B cell (primary cell): ENCODE measurements at regions of chr17 and their contacts with region 1.

Region 1: DNA sequence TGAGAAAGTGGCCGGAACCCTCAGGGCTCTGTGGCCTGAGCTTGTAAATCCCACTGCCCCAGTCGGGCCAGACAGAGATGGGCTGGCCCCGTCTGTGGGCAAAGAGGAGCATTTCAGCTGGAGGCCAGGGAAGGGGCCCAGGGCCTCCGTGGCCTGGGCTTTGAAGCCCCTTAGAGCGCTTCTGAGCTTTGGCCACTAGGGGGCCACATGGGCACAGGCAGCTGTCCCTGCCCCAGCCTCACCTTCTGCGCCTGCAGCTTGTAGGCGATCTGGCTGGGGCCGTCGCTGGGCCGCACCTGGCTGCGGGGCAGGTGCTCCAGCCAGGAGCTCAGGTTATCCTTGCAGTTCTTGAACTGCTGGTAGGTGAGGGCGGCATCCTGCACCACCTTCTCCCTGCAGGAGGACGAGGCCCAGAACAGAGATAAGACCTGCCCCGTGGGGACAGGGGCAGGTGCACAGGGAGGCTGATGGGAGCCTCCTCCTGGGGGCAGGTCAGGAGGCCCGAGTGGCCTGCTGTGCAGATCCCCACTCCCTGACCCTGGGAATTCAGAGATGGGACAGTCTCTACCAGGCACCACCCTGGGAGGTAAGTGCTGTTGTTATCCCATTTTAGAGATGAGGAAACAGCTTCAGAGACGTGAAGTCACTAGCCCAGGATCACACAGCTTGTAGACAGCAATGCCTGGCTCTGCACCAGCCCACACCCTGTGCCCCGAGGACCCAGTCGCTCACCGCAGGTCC is 12.8 kb downstream of the EVPL start:
- DNase-seq: peak; percentile 83
- ATAC-seq: peak; percentile 98
- H3K4me3 ChIP-seq: no peak overlapping the region
- H3K4me3 Mint-ChIP-seq: no peak overlapping the region
- H3K27ac ChIP-seq: no peak overlapping the region
- H3K27ac Mint-ChIP-seq: peak overlapping the region; percentile 56
- H3K4me1 ChIP-seq: peaks cover 0 to 7% of the 10 kb centered on the region in 2 donors
- H3K4me1 Mint-ChIP-seq: no peaks in the 10 kb centered on the region
- H3K27me3 ChIP-seq: peaks cover 0 to 7% (median 2%) of the 10 kb centered on the region in 4 experiments
- H3K27me3 Mint-ChIP-seq: no peaks in the 10 kb centered on the region
- CTCF ChIP-seq: peak; percentile 98

Region 2: DNA sequence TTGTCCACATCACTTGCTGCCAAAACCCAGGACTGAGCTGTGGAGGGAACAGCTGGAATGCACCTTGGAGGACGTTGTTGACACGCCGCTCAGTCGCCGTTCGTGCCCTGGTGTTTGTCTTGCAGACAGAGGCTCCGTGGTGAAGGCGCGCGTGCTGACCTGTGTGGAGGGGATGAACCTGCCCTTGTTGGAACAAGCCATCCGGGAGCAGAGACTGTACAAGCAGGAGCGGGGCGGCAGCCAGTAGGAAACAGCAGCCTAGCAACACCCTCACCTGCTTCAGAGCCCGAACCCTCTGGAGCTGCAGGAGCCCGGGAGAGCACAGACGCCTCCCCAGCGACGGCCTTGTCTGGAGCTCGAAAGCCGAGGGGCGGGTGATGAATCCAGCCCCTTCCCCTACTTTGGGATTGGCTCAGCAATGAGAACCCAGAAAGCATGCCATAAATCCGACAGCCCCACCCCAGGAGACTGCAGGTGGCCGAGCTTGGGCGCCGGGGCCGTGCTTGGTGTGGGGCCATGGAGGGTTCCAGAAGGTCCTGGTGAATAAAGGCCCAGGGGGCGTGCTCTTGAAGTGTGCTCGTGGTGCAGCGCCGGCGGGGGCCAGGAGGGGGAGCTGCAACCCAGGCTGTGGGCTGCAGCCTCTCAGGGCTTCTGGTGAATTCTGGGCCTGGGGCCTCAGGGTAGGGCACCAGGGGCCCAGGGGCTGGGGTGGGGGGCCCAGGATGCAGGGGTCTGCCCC is 14.2 kb before region 1 on chr17:
- CTCF ChIA-PET with region 1: interaction called, 20 read pairs
- POLR2A ChIA-PET with region 1: no interaction called
- intact Hi-C with region 1: no loop called
- DNase-seq: peak; percentile 60
- ATAC-seq: peak; percentile 74
- H3K4me3 ChIP-seq: no peak overlapping the region
- H3K4me3 Mint-ChIP-seq: no peak overlapping the region
- H3K27ac ChIP-seq: no peak overlapping the region
- H3K27ac Mint-ChIP-seq: no peak overlapping the region
- H3K4me1 ChIP-seq: peaks cover 9 to 14% of the 10 kb centered on the region in 2 donors
- H3K4me1 Mint-ChIP-seq: peaks cover 11% of the 10 kb centered on the region
- H3K27me3 ChIP-seq: no peaks in the 10 kb centered on the region
- H3K27me3 Mint-ChIP-seq: no peaks in the 10 kb centered on the region
- CTCF ChIP-seq: peak; percentile 70

Region 3: DNA sequence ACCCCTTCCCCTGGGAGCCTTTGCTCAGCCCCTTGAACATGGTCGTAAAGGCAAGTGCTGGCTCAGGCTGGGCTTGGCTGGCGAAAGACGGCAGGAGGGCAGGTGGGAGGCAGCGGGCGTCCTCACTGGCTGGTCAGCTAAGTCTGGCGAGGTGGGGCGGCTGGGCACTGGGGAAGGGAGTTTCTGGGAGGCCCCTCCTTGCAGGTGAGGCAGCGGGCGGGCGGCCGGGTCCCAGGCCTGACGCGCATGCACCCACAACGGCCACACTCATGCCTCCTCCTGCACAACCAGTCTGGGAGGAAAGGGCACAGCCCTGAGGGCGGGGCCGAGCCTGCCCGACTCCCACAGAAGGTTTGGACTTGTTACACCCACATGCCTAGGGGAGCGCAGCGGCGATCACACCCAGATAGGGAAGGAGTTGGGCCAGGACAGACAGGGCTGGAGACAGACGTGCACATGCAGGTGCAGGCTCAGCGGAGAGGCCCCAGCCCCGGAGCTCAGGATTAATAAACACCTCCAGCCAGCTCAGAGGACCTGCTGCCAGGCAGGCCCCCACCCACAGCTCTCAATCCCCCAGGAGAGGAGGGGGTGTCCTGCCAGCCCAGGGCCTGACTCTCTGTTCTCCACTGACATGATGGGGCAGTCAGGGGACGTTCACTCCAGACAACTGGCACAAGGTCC is 12.9 kb after region 1 on chr17 and contains the start of gene EVPL:
- CTCF ChIA-PET with region 1: interaction called, 11 read pairs
- POLR2A ChIA-PET with region 1: interaction called, 3 read pairs
- intact Hi-C with region 1: no loop called
- DNase-seq: no peak
- ATAC-seq: no peak
- H3K4me3 ChIP-seq: no peak within 1 kb of the TSS
- H3K4me3 Mint-ChIP-seq: no peak within 1 kb of the TSS
- H3K27ac ChIP-seq: no peak within 1 kb of the TSS
- H3K27ac Mint-ChIP-seq: no peak within 1 kb of the TSS
- H3K4me1 ChIP-seq: peaks cover 8 to 9% of the 10 kb centered on the region in 2 donors
- H3K4me1 Mint-ChIP-seq: peaks cover 8% of the 10 kb centered on the region
- H3K27me3 ChIP-seq: peaks cover 0 to 2% (median 0%) of the 10 kb centered on the region in 4 experiments
- H3K27me3 Mint-ChIP-seq: no peaks in the 10 kb centered on the region
- CTCF ChIP-seq: no peak
- total RNA-seq, gene EVPL: not detected in 2 replicates

Region 4: GRCh38 chr17:76296186-76296585 is 281.8 kb after region 1 on chr17:
- CTCF ChIA-PET with region 1: interaction called, 59 read pairs
- POLR2A ChIA-PET with region 1: no interaction called
- intact Hi-C with region 1: no loop called
- DNase-seq: no peak
- ATAC-seq: no peak
- H3K4me3 ChIP-seq: no peak overlapping the region
- H3K4me3 Mint-ChIP-seq: no peak overlapping the region
- H3K27ac ChIP-seq: no peak overlapping the region
- H3K27ac Mint-ChIP-seq: no peak overlapping the region
- H3K4me1 ChIP-seq: no peaks in the 10 kb centered on the region
- H3K4me1 Mint-ChIP-seq: no peaks in the 10 kb centered on the region
- H3K27me3 ChIP-seq: no peaks in the 10 kb centered on the region
- H3K27me3 Mint-ChIP-seq: no peaks in the 10 kb centered on the region
- CTCF ChIP-seq: no peak